Right cardiac atrium (tissue), 5 donors: ENCODE measurements at regions of chr20 and their contacts with region 1.

Region 1: GRCh38 chr20:50509935-50510705 is at the start of gene PTPN1:
- DNase-seq: peak; percentile 99
- ATAC-seq: peak; percentile 99
- H3K4me3 ChIP-seq: peak within 1 kb of the TSS; percentile 94
- H3K27ac ChIP-seq: peak within 1 kb of the TSS; percentile 93
- H3K4me1 ChIP-seq: peaks cover 8% of the 10 kb centered on the region
- H3K27me3 ChIP-seq: no peaks in the 10 kb centered on the region
- total RNA-seq, gene PTPN1: 22.5 to 37.4 (median 27.2) TPM

Region 2: DNA sequence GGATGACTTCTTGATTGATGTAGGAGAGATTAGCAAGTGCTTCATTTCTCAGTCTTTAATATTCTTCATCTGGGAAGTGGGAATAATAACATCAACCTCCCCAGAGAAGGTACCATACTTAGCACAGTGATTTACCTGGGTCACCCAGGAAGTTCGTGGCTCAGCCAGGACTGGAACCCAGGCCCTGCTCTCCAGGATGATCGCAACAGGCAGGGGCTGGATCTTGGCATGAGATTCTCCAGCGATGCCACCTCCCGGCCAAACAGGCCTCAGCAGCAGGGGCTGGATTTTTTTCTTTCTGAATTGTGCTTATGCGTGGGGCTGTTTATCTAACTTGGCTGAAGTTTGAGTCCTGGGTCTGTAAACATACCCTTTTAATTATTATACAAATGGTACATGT is 129.5 kb before region 1 on chr20:
- intact Hi-C with region 1: no loop called
- DNase-seq: peak; percentile 54 to 79 (median 71)
- ATAC-seq: peak in 1 of 2 donors; percentile 29
- H3K4me3 ChIP-seq: no peak overlapping the region
- H3K27ac ChIP-seq: peak overlapping the region; percentile 15
- H3K4me1 ChIP-seq: peaks cover 19% of the 10 kb centered on the region
- H3K27me3 ChIP-seq: no peaks in the 10 kb centered on the region

Region 3: GRCh38 chr20:50569864-50570836 is 60.0 kb after region 1 on chr20:
- intact Hi-C with region 1: loop called in 3 of 4 experiments (anchors 5 to 10 kb)
- DNase-seq: no peak
- ATAC-seq: peak; percentile 28 to 34
- H3K4me3 ChIP-seq: no peak overlapping the region
- H3K27ac ChIP-seq: no peak overlapping the region
- H3K4me1 ChIP-seq: peaks cover 16% of the 10 kb centered on the region
- H3K27me3 ChIP-seq: no peaks in the 10 kb centered on the region

Region 4: GRCh38 chr20:50943069-50943468 is 432.9 kb after region 1 on chr20:
- intact Hi-C with region 1: no loop called
- DNase-seq: no peak
- ATAC-seq: no peak
- H3K4me3 ChIP-seq: no peak overlapping the region
- H3K27ac ChIP-seq: no peak overlapping the region
- H3K4me1 ChIP-seq: no peaks in the 10 kb centered on the region
- H3K27me3 ChIP-seq: no peaks in the 10 kb centered on the region